IMR-90 (cell line): ENCODE measurements at regions of chr17 and their contacts with region 1.

Region 1: DNA sequence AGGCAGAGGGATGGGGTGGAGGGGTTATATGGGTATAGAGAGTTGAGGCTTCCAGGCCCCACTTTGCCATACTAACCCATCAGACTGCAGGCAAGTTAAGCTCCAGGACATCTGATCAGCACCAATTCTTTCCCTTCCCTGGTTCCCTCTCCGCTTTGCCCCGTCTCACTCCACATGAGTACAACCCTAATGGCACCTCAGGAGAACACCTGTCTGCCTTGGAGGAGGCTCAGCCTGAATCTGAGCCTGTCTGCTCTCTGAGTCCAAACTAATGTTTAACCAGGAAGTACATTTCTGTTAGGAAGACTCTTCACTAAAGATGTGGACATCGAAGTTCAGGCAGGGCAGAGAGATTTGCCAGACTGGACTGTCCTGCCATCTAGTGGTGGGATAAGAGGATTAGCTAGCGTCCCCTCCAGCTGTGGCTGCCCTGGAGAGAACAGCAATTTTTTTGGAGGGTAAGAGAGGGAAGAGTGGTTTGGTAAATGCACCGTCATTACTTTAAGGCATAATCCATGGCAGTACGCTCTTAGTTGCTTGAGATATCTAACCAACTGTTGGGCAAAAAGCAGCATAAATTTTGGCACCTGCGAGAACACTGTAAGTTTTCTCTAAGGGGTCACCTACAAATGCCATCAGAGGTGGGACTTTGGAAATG is 29.2 kb upstream of the LRRC75A start:
- DNase-seq: peak; percentile 91
- ATAC-seq: peak; percentile 91
- H3K4me3 ChIP-seq: no peak overlapping the region
- H3K27ac ChIP-seq: peak overlapping the region; percentile 67
- H3K4me1 ChIP-seq: peaks cover 4% of the 10 kb centered on the region
- H3K27me3 ChIP-seq: no peaks in the 10 kb centered on the region; the same call in 1 of the 2 replicates
- CTCF ChIP-seq: peak; percentile 95
- POLR2A ChIP-seq: peak; percentile 47; the same call in 1 of the 2 replicates
- RAD21 ChIP-seq: peak; percentile 97

Region 2: GRCh38 chr17:16363749-16364536 is 157.3 kb before region 1 on chr17:
- CTCF ChIA-PET with region 1: interaction called, 5 read pairs
- POLR2A ChIA-PET with region 1: no interaction called
- dilution Hi-C with region 1: no loop called
- in situ Hi-C with region 1: loop called (anchors 10 kb)
- intact Hi-C with region 1: loop called (anchors 1 kb)
- DNase-seq: peak; percentile 69
- ATAC-seq: peak; percentile 99
- H3K4me3 ChIP-seq: no peak overlapping the region
- H3K27ac ChIP-seq: no peak overlapping the region
- H3K4me1 ChIP-seq: no peaks in the 10 kb centered on the region
- H3K27me3 ChIP-seq: no peaks in the 10 kb centered on the region
- CTCF ChIP-seq: peak; percentile 90
- POLR2A ChIP-seq: no peak
- RAD21 ChIP-seq: peak; percentile 77

Region 3: GRCh38 chr17:16453493-16453851 is 67.7 kb before region 1 on chr17:
- CTCF ChIA-PET with region 1: interaction called, 42 read pairs
- POLR2A ChIA-PET with region 1: no interaction called
- dilution Hi-C with region 1: no loop called
- in situ Hi-C with region 1: no loop called
- intact Hi-C with region 1: loop called (anchors 1 kb)
- DNase-seq: no peak
- ATAC-seq: peak; percentile 6; the same call in 1 of the 2 replicates
- H3K4me3 ChIP-seq: no peak overlapping the region
- H3K27ac ChIP-seq: no peak overlapping the region
- H3K4me1 ChIP-seq: no peaks in the 10 kb centered on the region
- H3K27me3 ChIP-seq: no peaks in the 10 kb centered on the region
- CTCF ChIP-seq: no peak
- POLR2A ChIP-seq: no peak
- RAD21 ChIP-seq: no peak

Region 4: GRCh38 chr17:16465861-16466338 is 55.3 kb before region 1 on chr17:
- CTCF ChIA-PET with region 1: interaction called, 8 read pairs
- POLR2A ChIA-PET with region 1: no interaction called
- dilution Hi-C with region 1: no loop called
- in situ Hi-C with region 1: loop called (anchors 5 kb)
- intact Hi-C with region 1: no loop called
- DNase-seq: no peak
- ATAC-seq: no peak
- H3K4me3 ChIP-seq: no peak overlapping the region
- H3K27ac ChIP-seq: no peak overlapping the region
- H3K4me1 ChIP-seq: peaks cover 12% of the 10 kb centered on the region
- H3K27me3 ChIP-seq: no peaks in the 10 kb centered on the region
- CTCF ChIP-seq: no peak
- POLR2A ChIP-seq: no peak
- RAD21 ChIP-seq: no peak

Region 5: DNA sequence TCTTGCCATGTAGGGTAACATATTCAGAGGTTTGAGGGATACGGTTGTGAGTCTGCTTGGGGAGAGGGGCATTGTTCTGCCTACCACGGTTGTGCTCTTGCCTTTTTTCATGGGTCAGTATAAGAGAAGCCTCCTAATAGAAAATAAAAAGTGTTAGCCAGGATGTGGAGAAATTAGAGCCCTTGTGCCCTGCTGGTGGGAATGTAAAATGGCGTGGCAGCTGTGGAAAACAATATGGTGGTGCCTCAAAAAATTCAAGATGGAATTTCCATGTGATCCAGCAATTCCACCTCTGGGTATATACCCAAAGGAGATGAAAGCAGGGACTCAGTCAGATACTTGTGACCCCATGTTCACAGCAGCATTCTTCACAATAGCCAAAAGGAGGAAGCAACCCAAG is 15.0 kb before region 1 on chr17:
- CTCF ChIA-PET with region 1: no interaction called
- POLR2A ChIA-PET with region 1: no interaction called
- dilution Hi-C with region 1: no loop called
- in situ Hi-C with region 1: no loop called
- intact Hi-C with region 1: no loop called
- DNase-seq: no peak
- ATAC-seq: no peak
- H3K4me3 ChIP-seq: no peak overlapping the region
- H3K27ac ChIP-seq: no peak overlapping the region
- H3K4me1 ChIP-seq: no peaks in the 10 kb centered on the region
- H3K27me3 ChIP-seq: peaks cover 16% of the 10 kb centered on the region
- CTCF ChIP-seq: 0 out of 2 replicates have a peak, but pooled peaks have one; percentile 12
- POLR2A ChIP-seq: no peak
- RAD21 ChIP-seq: no peak

Region 6: GRCh38 chr17:16537130-16537458 is 15.9 kb after region 1 on chr17:
- CTCF ChIA-PET with region 1: interaction called, 10 read pairs
- POLR2A ChIA-PET with region 1: interaction called, 3 read pairs
- dilution Hi-C with region 1: no loop called
- in situ Hi-C with region 1: no loop called
- intact Hi-C with region 1: no loop called
- DNase-seq: no peak
- ATAC-seq: no peak
- H3K4me3 ChIP-seq: no peak overlapping the region
- H3K27ac ChIP-seq: no peak overlapping the region
- H3K4me1 ChIP-seq: no peaks in the 10 kb centered on the region
- H3K27me3 ChIP-seq: no peaks in the 10 kb centered on the region
- CTCF ChIP-seq: no peak
- POLR2A ChIP-seq: no peak
- RAD21 ChIP-seq: no peak

Region 7: DNA sequence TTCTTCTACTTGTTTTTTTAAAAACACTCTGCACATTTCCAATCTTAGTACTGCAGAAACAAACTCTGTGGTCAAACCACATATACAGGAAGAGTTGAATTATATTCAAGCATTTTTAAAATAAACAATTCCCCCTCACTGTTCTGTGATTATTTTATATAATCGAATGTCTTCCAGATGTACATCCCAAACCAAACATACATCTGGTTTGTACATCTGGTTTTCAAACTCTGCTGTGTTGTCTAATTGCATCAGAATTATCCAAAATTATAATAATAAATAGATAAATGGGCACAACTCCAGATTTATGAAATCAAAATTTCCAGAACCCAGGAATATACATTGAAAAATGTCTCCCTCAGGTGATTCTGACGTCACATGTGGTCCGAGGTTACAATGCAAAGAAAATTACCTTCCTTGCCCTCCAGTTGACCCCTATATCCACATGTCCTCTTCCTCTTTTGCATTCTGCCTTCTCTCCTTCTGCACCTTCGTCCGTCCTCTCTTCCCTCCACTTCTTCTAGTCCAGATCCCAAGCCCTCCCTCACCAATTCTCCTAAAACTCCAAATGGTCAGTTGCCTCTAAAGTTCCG is 155.6 kb after region 1 on chr17:
- CTCF ChIA-PET with region 1: no interaction called
- POLR2A ChIA-PET with region 1: no interaction called
- dilution Hi-C with region 1: no loop called
- in situ Hi-C with region 1: no loop called
- intact Hi-C with region 1: no loop called
- DNase-seq: peak; percentile 25
- ATAC-seq: peak; percentile 24; the same call in 1 of the 2 replicates
- H3K4me3 ChIP-seq: no peak overlapping the region
- H3K27ac ChIP-seq: no peak overlapping the region
- H3K4me1 ChIP-seq: no peaks in the 10 kb centered on the region
- H3K27me3 ChIP-seq: peaks cover 8% of the 10 kb centered on the region
- CTCF ChIP-seq: no peak
- POLR2A ChIP-seq: no peak
- RAD21 ChIP-seq: no peak